GM12878 (cell line): ENCODE measurements at regions of chr1 and their contacts with region 1.

Region 1: GRCh38 chr1:223628233-223629125 is 37.0 kb downstream of the CAPN8 start:
- DNase-seq: no peak
- ATAC-seq: peak; percentile 90
- H3K4me3 ChIP-seq: no peak overlapping the region
- H3K27ac ChIP-seq: no peak overlapping the region
- H3K4me1 ChIP-seq: no peaks in the 10 kb centered on the region
- H3K27me3 ChIP-seq: peaks cover 0 to 3% of the 10 kb centered on the region in 2 experiments; a peak in 1 of 4 replicates
- CTCF ChIP-seq: peak; percentile 67 to 78 (median 71)
- EP300 ChIP-seq: no peak
- POLR2A ChIP-seq: no peak
- RAD21 ChIP-seq: peak; percentile 58

Region 2: DNA sequence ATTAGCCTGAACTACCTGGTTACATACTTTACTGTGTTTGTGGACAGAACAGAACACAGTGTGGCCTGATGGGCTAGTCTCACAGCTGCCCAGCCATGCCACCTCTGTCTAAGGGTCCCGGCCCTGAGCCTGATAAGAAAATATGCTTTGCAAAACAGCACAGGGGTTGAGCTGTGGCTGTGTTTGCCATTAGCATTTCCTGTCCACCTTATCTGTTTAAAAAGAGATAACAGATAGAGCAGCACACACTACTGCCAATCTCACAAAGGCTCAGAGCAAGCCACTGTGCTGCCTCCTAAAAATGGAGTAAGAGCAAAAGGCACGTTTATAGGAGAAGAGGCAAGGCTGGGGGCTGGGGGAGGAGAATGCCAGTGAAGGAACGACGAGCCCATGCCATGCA is 359.5 kb before region 1 on chr1:
- CTCF ChIA-PET with region 1: no interaction called
- POLR2A ChIA-PET with region 1: no interaction called
- RAD21 ChIA-PET with region 1: no interaction called
- SMC1A ChIA-PET with region 1: no interaction called
- in situ Hi-C with region 1: no loop called
- intact Hi-C with region 1: no loop called
- DNase-seq: no peak
- ATAC-seq: no peak
- H3K4me3 ChIP-seq: no peak overlapping the region
- H3K27ac ChIP-seq: no peak overlapping the region
- H3K4me1 ChIP-seq: no peaks in the 10 kb centered on the region
- H3K27me3 ChIP-seq: peaks cover 0 to 2% of the 10 kb centered on the region in 2 experiments
- CTCF ChIP-seq: no peak
- EP300 ChIP-seq: no peak
- POLR2A ChIP-seq: no peak
- RAD21 ChIP-seq: no peak

Region 3: GRCh38 chr1:223312705-223313414 is 315.6 kb before region 1 on chr1:
- CTCF ChIA-PET with region 1: no interaction called
- POLR2A ChIA-PET with region 1: no interaction called
- RAD21 ChIA-PET with region 1: no interaction called
- SMC1A ChIA-PET with region 1: no interaction called
- in situ Hi-C with region 1: no loop called
- intact Hi-C with region 1: no loop called
- DNase-seq: no peak
- ATAC-seq: no peak
- H3K4me3 ChIP-seq: no peak overlapping the region
- H3K27ac ChIP-seq: no peak overlapping the region
- H3K4me1 ChIP-seq: no peaks in the 10 kb centered on the region
- H3K27me3 ChIP-seq: no peaks in the 10 kb centered on the region; a peak in 1 of 4 replicates
- CTCF ChIP-seq: no peak
- EP300 ChIP-seq: no peak
- POLR2A ChIP-seq: no peak
- RAD21 ChIP-seq: no peak

Region 4: GRCh38 chr1:223611936-223612335 is 16.5 kb before region 1 on chr1:
- CTCF ChIA-PET with region 1: interaction called, 64 read pairs
- POLR2A ChIA-PET with region 1: interaction called, 3 read pairs
- RAD21 ChIA-PET with region 1: interaction called, 5 read pairs
- SMC1A ChIA-PET with region 1: interaction called, 7 read pairs
- in situ Hi-C with region 1: no loop called
- intact Hi-C with region 1: no loop called
- DNase-seq: no peak
- ATAC-seq: no peak
- H3K4me3 ChIP-seq: no peak overlapping the region
- H3K27ac ChIP-seq: no peak overlapping the region
- H3K4me1 ChIP-seq: no peaks in the 10 kb centered on the region
- H3K27me3 ChIP-seq: peaks cover 0 to 3% of the 10 kb centered on the region in 2 experiments; a peak in 1 of 4 replicates
- CTCF ChIP-seq: no peak
- EP300 ChIP-seq: no peak
- POLR2A ChIP-seq: no peak
- RAD21 ChIP-seq: no peak